B cell (primary cell): ENCODE measurements at regions of chrX and their contacts with region 1.

Region 1: GRCh38 chrX:155026726-155027508 is at the start of gene FUNDC2:
- DNase-seq: peak; percentile 95
- ATAC-seq: peak; percentile 86
- H3K4me3 ChIP-seq: peak within 1 kb of the TSS; percentile 65 to 85 (median 70)
- H3K4me3 Mint-ChIP-seq: peak within 1 kb of the TSS; percentile 92
- H3K27ac ChIP-seq: peak within 1 kb of the TSS; percentile 90 to 94
- H3K27ac Mint-ChIP-seq: peak within 1 kb of the TSS; percentile 92
- H3K4me1 ChIP-seq: peaks cover 4 to 8% of the 10 kb centered on the region in 2 donors
- H3K4me1 Mint-ChIP-seq: peaks cover 24% of the 10 kb centered on the region
- H3K27me3 ChIP-seq: no peaks in the 10 kb centered on the region
- H3K27me3 Mint-ChIP-seq: no peaks in the 10 kb centered on the region
- CTCF ChIP-seq: no peak
- total RNA-seq, gene FUNDC2: 42.3 and 46.5 TPM in 2 replicates

Region 2: GRCh38 chrX:154804957-154805695 is 221.8 kb before region 1 on chrX and contains the start of gene MPP1:
- CTCF ChIA-PET with region 1: no interaction called
- POLR2A ChIA-PET with region 1: no interaction called
- intact Hi-C with region 1: loop called (anchors 10 kb)
- DNase-seq: peak; percentile 82
- ATAC-seq: peak; percentile 100
- H3K4me3 ChIP-seq: peak within 1 kb of the TSS; percentile 49 to 69 (median 65)
- H3K4me3 Mint-ChIP-seq: peak within 1 kb of the TSS; percentile 85
- H3K27ac ChIP-seq: no peak within 1 kb of the TSS
- H3K27ac Mint-ChIP-seq: peak within 1 kb of the TSS; percentile 37
- H3K4me1 ChIP-seq: peaks cover 16 to 21% of the 10 kb centered on the region in 2 donors
- H3K4me1 Mint-ChIP-seq: peaks cover 22% of the 10 kb centered on the region
- H3K27me3 ChIP-seq: no peaks in the 10 kb centered on the region
- H3K27me3 Mint-ChIP-seq: no peaks in the 10 kb centered on the region
- CTCF ChIP-seq: no peak
- total RNA-seq, gene MPP1: 7.2 and 7.7 TPM in 2 replicates

Region 3: GRCh38 chrX:154980330-154981096 is 46.4 kb before region 1 on chrX:
- CTCF ChIA-PET with region 1: interaction called, 5 read pairs
- POLR2A ChIA-PET with region 1: no interaction called
- intact Hi-C with region 1: loop called (anchors 1 kb)
- DNase-seq: peak; percentile 82
- ATAC-seq: peak; percentile 93
- H3K4me3 ChIP-seq: peak overlapping the region in 4 of 5 experiments; percentile 6 to 40 (median 22)
- H3K4me3 Mint-ChIP-seq: peak overlapping the region; percentile 79
- H3K27ac ChIP-seq: no peak overlapping the region
- H3K27ac Mint-ChIP-seq: no peak overlapping the region
- H3K4me1 ChIP-seq: peaks cover 0 to 9% of the 10 kb centered on the region in 2 donors
- H3K4me1 Mint-ChIP-seq: peaks cover 2% of the 10 kb centered on the region
- H3K27me3 ChIP-seq: no peaks in the 10 kb centered on the region
- H3K27me3 Mint-ChIP-seq: peaks cover 8% of the 10 kb centered on the region
- CTCF ChIP-seq: peak; percentile 72

Region 4: DNA sequence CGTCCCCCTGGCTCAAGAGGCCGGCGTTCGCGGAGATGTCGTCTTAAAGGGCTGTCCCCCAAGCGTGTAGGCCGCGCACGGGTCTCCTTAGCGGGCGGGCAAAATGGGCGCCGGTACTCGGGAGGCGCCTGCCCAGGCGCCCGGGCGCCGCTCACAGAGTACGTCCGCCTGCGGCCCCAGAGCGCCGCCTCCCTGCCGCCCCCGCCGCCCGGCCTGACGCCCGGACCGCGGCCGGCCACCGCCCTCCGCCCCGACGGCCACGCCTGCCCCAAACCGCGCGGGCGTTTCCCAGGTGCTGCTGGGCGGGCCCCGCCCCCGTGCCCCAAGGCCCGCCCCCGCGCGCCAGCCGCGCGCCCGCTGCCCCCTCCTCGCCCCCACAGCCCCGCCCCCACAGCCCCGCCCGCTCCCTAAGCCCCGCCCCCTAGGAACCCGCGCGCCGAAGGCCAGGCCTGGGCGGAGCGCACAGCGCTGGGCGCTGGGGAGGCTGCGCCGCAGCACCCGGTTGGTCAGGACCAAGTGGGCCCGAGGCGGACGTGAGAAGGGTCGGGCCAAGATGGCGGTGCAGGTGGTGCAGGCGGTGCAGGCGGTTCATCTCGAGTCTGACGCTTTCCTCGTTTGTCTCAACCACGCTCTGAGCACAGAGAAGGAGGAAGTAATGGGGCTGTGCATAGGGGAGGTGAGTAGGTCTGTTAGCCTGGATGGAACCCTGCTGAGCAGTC is 44.2 kb after region 1 on chrX and contains the starts of genes BRCC3, CMC4 and MTCP1:
- CTCF ChIA-PET with region 1: interaction called, 6 read pairs
- POLR2A ChIA-PET with region 1: interaction called, 7 read pairs
- intact Hi-C with region 1: loop called (anchors 1 kb)
- DNase-seq: peak; percentile 88
- ATAC-seq: peak; percentile 84
- H3K4me3 ChIP-seq: peak within 1 kb of the TSS; percentile 62 to 81 (median 77)
- H3K4me3 Mint-ChIP-seq: peak within 1 kb of the TSS; percentile 94
- H3K27ac ChIP-seq: peak within 1 kb of the TSS; percentile 88 to 89
- H3K27ac Mint-ChIP-seq: peak within 1 kb of the TSS; percentile 95
- H3K4me1 ChIP-seq: peaks cover 17 to 34% of the 10 kb centered on the region in 2 donors
- H3K4me1 Mint-ChIP-seq: peaks cover 50% of the 10 kb centered on the region
- H3K27me3 ChIP-seq: no peaks in the 10 kb centered on the region
- H3K27me3 Mint-ChIP-seq: no peaks in the 10 kb centered on the region
- CTCF ChIP-seq: no peak
- total RNA-seq, gene BRCC3: 14.3 and 16.9 TPM in 2 replicates
- total RNA-seq, gene CMC4: 4.4 and 6.0 TPM in 2 replicates
- total RNA-seq, gene MTCP1: 13.4 and 20.3 TPM in 2 replicates

Region 5: DNA sequence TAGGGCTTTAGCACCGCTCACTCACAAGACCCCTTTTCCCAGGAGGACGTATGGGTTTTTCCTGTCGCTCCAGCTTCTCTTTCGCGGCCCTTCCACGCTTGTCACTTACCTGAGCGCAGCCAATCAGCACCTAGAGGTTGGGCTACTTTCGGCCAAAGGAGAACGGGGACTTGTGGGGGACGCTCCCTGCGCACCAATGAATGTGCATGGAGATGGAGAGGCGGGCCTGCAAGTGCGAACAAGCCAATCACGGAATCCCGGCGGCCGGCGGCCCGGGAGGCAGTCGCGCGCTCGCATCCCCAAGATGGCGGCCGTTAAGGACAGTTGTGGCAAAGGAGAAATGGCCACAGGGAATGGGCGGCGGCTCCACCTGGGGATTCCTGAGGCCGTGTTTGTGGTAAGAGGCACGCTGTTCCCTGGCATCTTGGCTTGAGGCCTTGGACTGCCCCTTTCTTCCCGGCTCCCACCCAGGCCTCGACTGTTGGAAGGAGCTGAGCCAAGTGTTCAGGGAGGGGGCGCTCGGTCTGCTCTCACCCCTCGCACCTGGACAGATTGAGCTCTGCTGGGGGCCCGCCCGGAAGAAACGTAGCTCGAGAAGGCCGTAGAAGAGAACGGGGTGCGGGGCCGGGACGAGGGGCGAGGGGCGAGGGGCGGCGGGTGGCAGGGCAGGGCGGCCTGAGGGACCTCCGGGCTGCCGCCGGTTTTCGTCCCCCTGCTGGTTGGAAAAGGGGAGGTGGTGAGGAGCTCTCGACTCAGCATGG is 189.4 kb after region 1 on chrX and contains the start of gene VBP1:
- CTCF ChIA-PET with region 1: interaction called, 3 read pairs
- POLR2A ChIA-PET with region 1: no interaction called
- intact Hi-C with region 1: loop called (anchors 5 kb)
- DNase-seq: peak; percentile 90
- ATAC-seq: peak; percentile 98
- H3K4me3 ChIP-seq: peak within 1 kb of the TSS; percentile 74 to 85 (median 79)
- H3K4me3 Mint-ChIP-seq: peak within 1 kb of the TSS; percentile 93
- H3K27ac ChIP-seq: peak within 1 kb of the TSS; percentile 79 to 87
- H3K27ac Mint-ChIP-seq: peak within 1 kb of the TSS; percentile 91
- H3K4me1 ChIP-seq: peaks cover 10 to 11% of the 10 kb centered on the region in 2 donors
- H3K4me1 Mint-ChIP-seq: peaks cover 25% of the 10 kb centered on the region
- H3K27me3 ChIP-seq: no peaks in the 10 kb centered on the region
- H3K27me3 Mint-ChIP-seq: no peaks in the 10 kb centered on the region
- CTCF ChIP-seq: peak; percentile 64
- total RNA-seq, gene VBP1: 29.7 and 30.0 TPM in 2 replicates

Region 6: GRCh38 chrX:155263854-155264628 is 237.1 kb after region 1 on chrX and contains the start of gene RAB39B:
- CTCF ChIA-PET with region 1: no interaction called
- POLR2A ChIA-PET with region 1: no interaction called
- intact Hi-C with region 1: loop called (anchors 2 kb)
- DNase-seq: peak; percentile 75
- ATAC-seq: peak; percentile 86
- H3K4me3 ChIP-seq: peak within 1 kb of the TSS; percentile 5 to 77 (median 64)
- H3K4me3 Mint-ChIP-seq: peak within 1 kb of the TSS; percentile 88
- H3K27ac ChIP-seq: peak within 1 kb of the TSS; percentile 66 to 89
- H3K27ac Mint-ChIP-seq: peak within 1 kb of the TSS; percentile 85
- H3K4me1 ChIP-seq: peaks cover 4 to 11% of the 10 kb centered on the region in 2 donors
- H3K4me1 Mint-ChIP-seq: peaks cover 20% of the 10 kb centered on the region
- H3K27me3 ChIP-seq: no peaks in the 10 kb centered on the region
- H3K27me3 Mint-ChIP-seq: no peaks in the 10 kb centered on the region
- CTCF ChIP-seq: no peak
- total RNA-seq, gene RAB39B: 7.8 and 8.8 TPM in 2 replicates